ENCODE measurements at regions of chr17 and their contacts with region 1.

Region 1: DNA sequence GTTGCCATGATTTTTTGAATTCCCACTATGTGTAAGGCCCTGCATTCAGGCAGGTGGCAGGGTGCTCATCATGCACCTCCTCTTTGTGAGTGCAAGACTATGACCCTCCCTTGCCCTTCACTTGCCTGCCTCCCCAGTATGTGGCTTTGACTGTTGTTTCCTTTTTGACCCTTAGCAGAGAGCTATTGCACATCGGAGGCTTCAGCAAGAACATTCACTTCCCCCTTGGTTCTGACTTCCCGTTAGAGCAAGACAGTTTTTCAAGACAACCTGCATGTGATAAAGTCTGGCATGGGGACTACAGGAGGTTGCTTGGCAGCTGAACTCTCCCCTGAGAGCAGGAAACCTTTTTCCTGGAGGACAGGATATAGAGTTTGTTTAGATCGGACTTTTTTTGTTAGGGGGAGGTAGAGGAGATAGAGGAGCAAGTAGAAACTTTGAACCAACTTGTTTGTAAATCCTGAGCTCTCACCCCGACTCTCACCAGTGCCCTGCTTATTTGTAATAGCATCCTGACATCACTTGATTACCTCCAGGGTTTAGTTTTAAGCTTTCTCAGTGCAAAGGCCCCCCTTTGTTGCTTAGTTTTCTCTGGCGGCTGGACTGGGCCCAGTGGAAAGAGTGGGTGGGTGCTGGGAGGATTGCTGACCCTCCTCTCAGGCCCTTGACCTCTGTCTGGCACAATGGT is 34.3 kb downstream of the LIMD2 start:
- DNase-seq: no peak
- ATAC-seq: no peak
- H3K4me3 ChIP-seq: no peak overlapping the region
- H3K27ac ChIP-seq: no peak overlapping the region
- H3K4me1 ChIP-seq: no peaks in the 10 kb centered on the region
- H3K27me3 ChIP-seq: no peaks in the 10 kb centered on the region
- CTCF ChIP-seq: no peak
- EP300 ChIP-seq: no peak
- POLR2A ChIP-seq: no peak
- RAD21 ChIP-seq: no peak

Region 2: DNA sequence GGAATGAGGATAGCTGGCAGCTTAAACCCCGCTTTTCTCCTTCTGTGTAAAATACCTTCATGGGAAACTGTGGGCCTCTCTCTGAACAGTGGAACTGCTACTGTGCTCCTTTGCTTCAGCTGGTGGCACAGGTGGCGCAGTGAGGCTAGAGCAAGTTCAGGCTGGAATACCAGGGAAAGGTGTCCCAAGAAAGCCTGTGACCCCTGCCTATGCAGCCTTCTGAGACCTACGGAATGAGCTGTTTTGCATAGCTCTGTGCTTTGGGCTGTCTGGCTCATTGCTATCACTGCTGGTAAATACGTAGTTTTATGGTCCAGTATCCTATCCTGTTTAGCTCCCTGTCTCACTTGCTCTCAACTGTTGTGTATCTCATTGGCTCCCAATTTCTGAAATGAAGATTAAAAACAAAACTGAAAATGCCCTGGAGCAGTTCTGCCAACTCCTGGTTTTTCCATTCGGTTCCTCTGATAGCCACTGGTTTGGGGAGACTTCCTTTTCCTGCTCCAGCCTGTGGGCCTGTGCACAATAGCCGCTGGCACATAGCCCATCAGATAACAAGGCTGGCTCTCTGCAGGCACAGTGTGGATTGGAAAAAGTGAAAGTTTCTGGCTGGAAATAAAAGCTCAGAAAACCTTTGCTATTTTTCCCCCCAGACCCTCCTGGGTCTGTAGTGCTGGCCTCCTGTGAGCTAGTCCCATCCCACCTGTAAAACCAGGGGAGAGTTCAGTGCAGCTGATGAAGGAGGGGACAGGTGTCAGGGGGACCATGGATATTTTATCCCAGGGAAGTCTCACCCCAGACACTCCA is 10.1 kb after region 1 on chr17:
- CTCF ChIA-PET with region 1: no interaction called
- POLR2A ChIA-PET with region 1: interaction called, 17 read pairs
- in situ Hi-C with region 1: no loop called
- intact Hi-C with region 1: no loop called
- DNase-seq: peak; percentile 64 to 95 (median 76)
- ATAC-seq: peak; percentile 92
- H3K4me3 ChIP-seq: peak overlapping the region; percentile 3; the same call in 1 of the 2 replicates
- H3K27ac ChIP-seq: peak overlapping the region; percentile 62
- H3K4me1 ChIP-seq: peaks cover 10 to 24% of the 10 kb centered on the region in 2 experiments
- H3K27me3 ChIP-seq: no peaks in the 10 kb centered on the region
- CTCF ChIP-seq: no peak
- EP300 ChIP-seq: peak; percentile 45; the same call in 1 of the 2 replicates
- POLR2A ChIP-seq: no peak
- RAD21 ChIP-seq: peak in 1 of 2 experiments; percentile 26; a peak in 2 of 4 replicates

Measured in K562 (cell line).